ENCODE measurements at regions of chr15 and their contacts with region 1.

Region 1: GRCh38 chr15:47206358-47206978 is 510.8 kb upstream of the SEMA6D start:
- DNase-seq: no peak

Region 2: DNA sequence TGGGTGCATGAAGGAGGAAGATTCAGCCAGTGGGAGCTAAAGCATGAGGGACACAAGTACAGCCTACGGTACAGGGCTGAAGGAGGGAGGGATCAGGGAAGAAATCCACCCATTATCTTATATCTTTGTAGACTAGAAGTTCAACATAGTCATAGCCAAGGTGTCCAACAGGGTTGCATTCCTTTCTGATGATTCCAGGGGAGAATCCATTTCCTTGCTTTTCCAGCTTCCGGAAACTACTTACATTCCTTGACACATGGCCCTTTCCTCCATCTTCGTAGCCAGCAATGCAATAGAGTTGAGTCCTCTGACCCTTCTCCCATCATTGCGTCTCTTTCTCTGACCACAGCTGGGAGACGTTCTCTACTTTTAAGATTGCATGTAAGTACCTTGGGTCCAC is 39.8 kb after region 1 on chr15:
- intact Hi-C with region 1: no loop called
- DNase-seq: no peak

Region 3: GRCh38 chr15:47944637-47945288 is 738.3 kb after region 1 on chr15:
- intact Hi-C with region 1: loop called in 1 of 2 experiments (anchors 5 kb)
- DNase-seq: no peak

Region 4: GRCh38 chr15:48631176-48631770 is 1424.8 kb after region 1 on chr15:
- intact Hi-C with region 1: loop called in 1 of 2 experiments (anchors 5 kb)
- DNase-seq: no peak